Upper lobe of right lung (tissue), 1 donor: ENCODE measurements at regions of chr9 and their contacts with region 1.

Region 1: GRCh38 chr9:70419546-70420266 is 5.2 kb upstream of the KLF9 start:
- DNase-seq: peak; percentile 99
- ATAC-seq: peak; percentile 73
- H3K4me3 ChIP-seq: peak overlapping the region; percentile 55
- H3K27ac ChIP-seq: peak overlapping the region; percentile 100
- H3K4me1 ChIP-seq: peaks cover 51% of the 10 kb centered on the region
- H3K27me3 ChIP-seq: no peaks in the 10 kb centered on the region
- CTCF ChIP-seq: peak; percentile 19

Region 2: DNA sequence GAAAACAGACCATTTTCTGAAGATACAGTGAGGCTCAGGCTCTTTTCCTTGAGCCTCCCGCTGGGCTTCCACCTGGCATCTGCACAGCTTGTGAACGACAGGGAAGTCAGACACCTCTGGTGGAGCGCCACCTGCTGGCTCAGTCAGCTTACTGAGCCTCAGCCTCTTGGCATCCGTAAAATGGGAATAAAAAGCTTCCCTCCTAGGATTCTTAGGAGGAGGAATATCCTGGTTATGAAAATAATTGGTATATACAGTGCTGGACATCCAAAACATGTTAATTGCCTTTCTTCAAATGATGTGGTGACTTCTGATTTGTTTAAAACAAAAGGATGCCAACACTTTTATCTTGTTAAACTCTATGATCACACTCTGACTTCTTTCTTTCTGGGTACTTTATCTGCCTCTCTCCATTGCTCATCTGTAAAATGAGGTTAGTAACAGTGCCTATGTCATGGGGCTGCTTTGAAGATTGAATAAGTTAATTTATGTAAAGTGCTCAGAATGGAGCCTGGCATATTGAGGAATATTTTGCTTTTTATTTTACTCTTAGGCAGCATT is 308.6 kb before region 1 on chr9:
- intact Hi-C with region 1: no loop called
- DNase-seq: peak; percentile 89
- ATAC-seq: peak; percentile 84
- H3K4me3 ChIP-seq: no peak overlapping the region
- H3K27ac ChIP-seq: no peak overlapping the region
- H3K4me1 ChIP-seq: peaks cover 4% of the 10 kb centered on the region
- H3K27me3 ChIP-seq: no peaks in the 10 kb centered on the region
- CTCF ChIP-seq: peak; percentile 84

Region 3: GRCh38 chr9:70484210-70485130 is 64.8 kb after region 1 on chr9:
- intact Hi-C with region 1: loop called (anchors 5 kb)
- DNase-seq: no peak
- ATAC-seq: peak; percentile 78
- H3K4me3 ChIP-seq: no peak overlapping the region
- H3K27ac ChIP-seq: peak overlapping the region; percentile 64
- H3K4me1 ChIP-seq: peaks cover 60% of the 10 kb centered on the region
- H3K27me3 ChIP-seq: no peaks in the 10 kb centered on the region
- CTCF ChIP-seq: peak; percentile 83

Region 4: DNA sequence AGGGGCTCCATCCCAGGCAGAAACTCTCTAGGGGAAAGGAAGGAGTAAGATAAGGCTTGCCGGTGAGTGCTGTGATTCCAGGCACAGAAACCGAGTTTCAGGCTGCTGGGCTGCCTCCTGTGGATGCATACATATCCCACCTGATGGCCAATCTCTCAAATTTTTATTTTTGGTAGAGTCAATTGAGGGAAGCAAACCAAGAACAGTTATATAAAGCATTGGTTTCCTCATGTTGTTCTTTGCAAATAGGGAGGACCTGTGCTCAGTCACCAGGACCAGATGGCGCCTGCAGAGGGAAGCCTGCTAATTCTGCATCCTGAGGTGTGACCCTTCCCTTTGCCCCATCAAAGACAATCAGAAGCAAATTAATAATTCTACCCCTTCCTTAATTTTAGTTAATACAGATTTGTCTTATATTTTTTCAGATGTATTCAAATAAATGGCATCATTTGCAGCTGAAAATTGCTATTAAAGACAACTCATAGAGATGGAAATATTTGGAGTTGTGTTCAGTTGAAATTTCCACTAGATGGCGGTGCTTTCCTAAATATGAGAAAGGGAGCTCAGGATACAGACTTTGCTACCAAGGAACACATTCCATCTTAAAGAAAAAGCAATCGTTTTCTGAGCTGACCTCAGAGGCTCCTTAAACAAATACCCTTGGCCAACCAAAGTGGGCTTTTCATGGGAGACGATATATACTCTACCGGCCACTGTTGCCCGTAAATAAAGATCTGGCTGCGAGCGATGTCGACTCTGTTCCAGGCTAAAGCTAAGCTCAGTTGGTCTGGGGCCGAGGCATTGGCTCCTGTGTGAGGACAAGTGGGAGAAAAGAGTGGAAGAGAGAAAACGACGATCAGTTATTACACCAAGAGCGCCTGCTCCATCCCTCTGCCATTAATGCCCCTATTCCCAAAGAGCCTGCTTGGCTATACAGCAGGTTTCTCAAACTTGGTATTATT is 220.4 kb after region 1 on chr9:
- intact Hi-C with region 1: no loop called
- DNase-seq: no peak
- ATAC-seq: peak; percentile 66
- H3K4me3 ChIP-seq: no peak overlapping the region
- H3K27ac ChIP-seq: no peak overlapping the region
- H3K4me1 ChIP-seq: no peaks in the 10 kb centered on the region
- H3K27me3 ChIP-seq: peaks cover 4% of the 10 kb centered on the region
- CTCF ChIP-seq: peak; percentile 62